Activated CD4-positive, alpha-beta T cell treated with anti-CD3 and anti-CD28 coated beads, Interleukin-2, amount 10 ng/mL, durations not matched to agents 7 days and 5 days (primary cell): ENCODE measurements at regions of chr9 and their contacts with region 1.

Region 1: GRCh38 chr9:131590908-131591844 is 45.9 kb downstream of the PRRT1B start:
- DNase-seq: peak; percentile 81
- H3K4me3 Mint-ChIP-seq: no peak overlapping the region
- H3K27ac Mint-ChIP-seq: peak overlapping the region; percentile 82
- H3K4me1 Mint-ChIP-seq: peaks cover 42% of the 10 kb centered on the region
- H3K27me3 Mint-ChIP-seq: no peaks in the 10 kb centered on the region

Region 2: GRCh38 chr9:131214286-131214856 is 376.8 kb before region 1 on chr9:
- CTCF ChIA-PET with region 1: no interaction called
- POLR2A ChIA-PET with region 1: no interaction called
- DNase-seq: no peak
- H3K4me3 Mint-ChIP-seq: no peak overlapping the region
- H3K27ac Mint-ChIP-seq: no peak overlapping the region
- H3K4me1 Mint-ChIP-seq: peaks cover 1% of the 10 kb centered on the region
- H3K27me3 Mint-ChIP-seq: no peaks in the 10 kb centered on the region

Region 3: GRCh38 chr9:131366761-131367401 is 224.3 kb before region 1 on chr9:
- CTCF ChIA-PET with region 1: no interaction called
- POLR2A ChIA-PET with region 1: no interaction called
- DNase-seq: no peak
- H3K4me3 Mint-ChIP-seq: no peak overlapping the region
- H3K27ac Mint-ChIP-seq: no peak overlapping the region
- H3K4me1 Mint-ChIP-seq: peaks cover 5% of the 10 kb centered on the region
- H3K27me3 Mint-ChIP-seq: no peaks in the 10 kb centered on the region

Region 4: GRCh38 chr9:131578731-131579504 is 12.3 kb before region 1 on chr9:
- CTCF ChIA-PET with region 1: interaction called, 10 read pairs
- POLR2A ChIA-PET with region 1: interaction called, 3 read pairs
- DNase-seq: peak; percentile 69
- H3K4me3 Mint-ChIP-seq: peak overlapping the region; percentile 47
- H3K27ac Mint-ChIP-seq: peak overlapping the region; percentile 94
- H3K4me1 Mint-ChIP-seq: peaks cover 29% of the 10 kb centered on the region
- H3K27me3 Mint-ChIP-seq: no peaks in the 10 kb centered on the region

Region 5: DNA sequence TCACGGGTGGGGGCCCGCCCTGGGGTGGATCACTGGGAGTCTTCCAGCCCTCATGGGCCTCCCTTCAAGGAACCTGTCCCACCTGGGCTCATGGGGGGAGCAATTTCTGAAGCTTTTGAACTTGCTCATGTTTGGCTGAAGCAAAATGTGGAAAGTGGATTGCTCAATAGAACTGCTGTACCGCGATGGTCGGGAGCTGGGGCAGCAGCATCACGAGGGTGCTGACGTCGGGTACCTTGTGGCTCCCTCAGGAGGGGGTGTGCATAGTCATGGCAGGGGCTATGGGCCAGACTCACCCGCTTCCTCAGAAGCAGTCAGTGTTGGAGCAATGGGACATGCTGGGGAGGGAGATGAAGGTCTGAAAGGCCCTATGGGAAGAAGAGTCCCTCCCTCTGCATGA is 12.0 kb after region 1 on chr9:
- CTCF ChIA-PET with region 1: interaction called, 21 read pairs
- POLR2A ChIA-PET with region 1: no interaction called
- DNase-seq: no peak
- H3K4me3 Mint-ChIP-seq: no peak overlapping the region
- H3K27ac Mint-ChIP-seq: peak overlapping the region; percentile 13
- H3K4me1 Mint-ChIP-seq: no peaks in the 10 kb centered on the region
- H3K27me3 Mint-ChIP-seq: no peaks in the 10 kb centered on the region

Region 6: GRCh38 chr9:131641618-131642495 is 50.7 kb after region 1 on chr9:
- CTCF ChIA-PET with region 1: no interaction called
- POLR2A ChIA-PET with region 1: no interaction called
- DNase-seq: no peak
- H3K4me3 Mint-ChIP-seq: no peak overlapping the region
- H3K27ac Mint-ChIP-seq: peak overlapping the region; percentile 92
- H3K4me1 Mint-ChIP-seq: peaks cover 40% of the 10 kb centered on the region
- H3K27me3 Mint-ChIP-seq: no peaks in the 10 kb centered on the region

Region 7: DNA sequence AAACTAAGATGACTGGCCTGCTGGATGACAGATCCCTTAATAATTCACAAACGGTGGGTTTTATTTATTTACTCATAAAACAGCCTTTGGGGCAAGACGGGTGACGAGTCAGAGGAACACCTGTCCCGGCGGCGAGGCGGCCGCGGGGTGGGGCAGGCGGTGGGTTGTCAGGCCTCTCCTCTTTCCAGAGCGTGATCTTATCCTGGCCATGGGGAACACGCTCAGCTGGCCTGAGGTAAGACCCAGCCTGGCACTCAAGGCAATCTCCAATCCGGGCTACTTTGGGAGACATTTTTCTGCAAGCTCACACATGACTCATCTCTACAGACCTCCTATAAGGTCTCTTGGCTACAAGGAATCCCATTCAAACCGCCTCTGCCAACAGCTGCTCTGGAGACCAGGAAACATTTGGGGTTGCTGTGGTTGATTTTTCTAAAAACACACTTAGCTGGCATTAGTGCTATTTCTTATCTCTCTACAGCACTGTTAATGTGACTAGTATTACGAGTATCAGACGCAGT is 142.4 kb after region 1 on chr9:
- CTCF ChIA-PET with region 1: interaction called, 62 read pairs
- POLR2A ChIA-PET with region 1: no interaction called
- DNase-seq: peak; percentile 34
- H3K4me3 Mint-ChIP-seq: peak overlapping the region; percentile 75
- H3K27ac Mint-ChIP-seq: peak overlapping the region; percentile 98
- H3K4me1 Mint-ChIP-seq: peaks cover 86% of the 10 kb centered on the region
- H3K27me3 Mint-ChIP-seq: no peaks in the 10 kb centered on the region

Region 8: DNA sequence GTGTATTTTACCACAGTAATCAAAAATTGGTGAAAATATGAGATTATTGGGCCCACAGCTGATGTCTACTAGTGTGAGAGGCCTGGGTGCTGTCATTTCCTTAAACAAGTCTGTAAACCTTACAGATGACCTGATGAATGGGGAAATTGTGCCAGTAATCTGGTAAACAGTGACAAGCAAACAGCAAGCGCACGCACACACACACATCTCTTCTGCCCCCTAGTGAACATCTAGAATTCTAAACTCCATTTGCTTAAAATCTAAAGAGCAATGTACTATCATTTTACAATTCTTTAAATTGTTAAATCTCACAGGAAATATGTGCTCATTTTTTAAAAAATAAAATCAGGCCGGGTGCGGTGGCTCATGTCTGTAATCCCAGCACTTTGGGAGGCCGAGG is 156.2 kb after region 1 on chr9:
- CTCF ChIA-PET with region 1: interaction called, 62 read pairs
- POLR2A ChIA-PET with region 1: no interaction called
- DNase-seq: peak; percentile 52
- H3K4me3 Mint-ChIP-seq: no peak overlapping the region
- H3K27ac Mint-ChIP-seq: no peak overlapping the region
- H3K4me1 Mint-ChIP-seq: peaks cover 35% of the 10 kb centered on the region
- H3K27me3 Mint-ChIP-seq: peaks cover 3% of the 10 kb centered on the region